Right ventricle myocardium inferior (tissue), 1 donor: ENCODE measurements at regions of chr10 and their contacts with region 1.

Region 1: DNA sequence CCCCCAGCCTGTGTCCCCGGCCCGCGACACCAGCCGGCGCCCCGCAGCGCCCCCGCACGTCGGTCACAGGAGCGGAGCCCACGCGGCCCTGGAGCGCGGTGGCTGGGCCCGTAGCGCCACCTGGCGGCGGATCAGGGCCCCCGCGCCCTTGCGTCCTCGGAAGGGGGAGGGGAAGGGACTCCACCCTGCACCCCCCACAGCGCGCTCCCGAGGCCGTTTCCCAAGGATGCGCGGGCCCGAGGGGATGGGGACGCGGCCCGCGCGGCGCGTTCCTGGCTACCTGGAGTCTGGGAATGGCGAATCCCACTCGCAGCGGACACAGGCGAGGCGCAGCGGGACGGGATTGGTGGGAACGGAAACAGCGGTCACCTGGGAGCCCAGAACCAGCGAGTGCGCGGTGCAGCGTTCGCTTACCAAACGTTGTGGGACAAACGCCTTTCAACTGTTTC is 23.8 kb upstream of the MKI67 start:
- DNase-seq: peak; percentile 86
- ATAC-seq: peak; percentile 89

Region 2: DNA sequence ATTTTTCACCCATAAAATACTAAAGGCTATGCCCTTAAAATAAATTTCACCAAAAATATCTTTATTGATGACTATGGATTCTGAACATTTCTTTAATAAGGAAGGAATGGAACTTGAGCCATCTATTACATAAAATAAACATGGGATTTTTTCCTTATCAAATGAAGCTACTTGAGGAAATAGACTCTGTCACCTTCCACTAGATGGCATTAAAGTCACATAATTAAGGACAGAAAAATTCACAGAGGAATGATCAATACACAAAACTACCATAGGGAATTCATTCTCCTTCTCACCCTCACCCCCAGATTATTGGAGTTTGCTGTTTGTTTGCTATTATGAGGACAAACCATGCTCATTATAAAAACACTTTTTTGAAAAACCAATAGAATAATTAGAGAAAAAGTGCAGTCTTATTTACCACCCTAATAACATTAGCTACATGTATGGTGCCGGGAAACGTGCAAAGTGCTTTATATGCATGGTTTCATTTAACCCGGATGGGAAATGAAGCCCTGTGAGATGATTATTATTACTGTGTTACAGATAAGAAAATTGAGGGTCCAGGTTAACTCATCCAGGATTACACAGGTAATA is 434.2 kb before region 1 on chr10:
- intact Hi-C with region 1: loop called (anchors 5 kb)
- DNase-seq: no peak
- ATAC-seq: no peak

Region 3: GRCh38 chr10:128078136-128078969 is 71.7 kb before region 1 on chr10:
- intact Hi-C with region 1: loop called (anchors 2 kb)
- DNase-seq: peak; percentile 52
- ATAC-seq: peak; percentile 56